ENCODE measurements at regions of chr10 and their contacts with region 1.

Region 1: GRCh38 chr10:74213571-74214162 is 62.6 kb downstream of the ADK start:
- DNase-seq: peak; percentile 70
- ATAC-seq: peak; percentile 62
- H3K4me3 ChIP-seq: no peak overlapping the region
- H3K4me3 Mint-ChIP-seq: no peak overlapping the region
- H3K27ac ChIP-seq: peak overlapping the region in 1 of 2 donors; percentile 69
- H3K27ac Mint-ChIP-seq: peak overlapping the region; percentile 39
- H3K4me1 ChIP-seq: peaks cover 6 to 10% of the 10 kb centered on the region in 2 donors
- H3K4me1 Mint-ChIP-seq: peaks cover 23% of the 10 kb centered on the region
- H3K27me3 ChIP-seq: no peaks in the 10 kb centered on the region
- H3K27me3 Mint-ChIP-seq: no peaks in the 10 kb centered on the region
- CTCF ChIP-seq: peak; percentile 68

Region 2: GRCh38 chr10:74120911-74121310 is 92.8 kb before region 1 on chr10:
- CTCF ChIA-PET with region 1: interaction called, 15 read pairs
- POLR2A ChIA-PET with region 1: no interaction called
- intact Hi-C with region 1: no loop called
- DNase-seq: no peak
- ATAC-seq: no peak
- H3K4me3 ChIP-seq: no peak overlapping the region
- H3K4me3 Mint-ChIP-seq: no peak overlapping the region
- H3K27ac ChIP-seq: no peak overlapping the region
- H3K27ac Mint-ChIP-seq: peak overlapping the region; percentile 16
- H3K4me1 ChIP-seq: no peaks in the 10 kb centered on the region
- H3K4me1 Mint-ChIP-seq: no peaks in the 10 kb centered on the region
- H3K27me3 ChIP-seq: no peaks in the 10 kb centered on the region
- H3K27me3 Mint-ChIP-seq: no peaks in the 10 kb centered on the region
- CTCF ChIP-seq: no peak

Region 3: DNA sequence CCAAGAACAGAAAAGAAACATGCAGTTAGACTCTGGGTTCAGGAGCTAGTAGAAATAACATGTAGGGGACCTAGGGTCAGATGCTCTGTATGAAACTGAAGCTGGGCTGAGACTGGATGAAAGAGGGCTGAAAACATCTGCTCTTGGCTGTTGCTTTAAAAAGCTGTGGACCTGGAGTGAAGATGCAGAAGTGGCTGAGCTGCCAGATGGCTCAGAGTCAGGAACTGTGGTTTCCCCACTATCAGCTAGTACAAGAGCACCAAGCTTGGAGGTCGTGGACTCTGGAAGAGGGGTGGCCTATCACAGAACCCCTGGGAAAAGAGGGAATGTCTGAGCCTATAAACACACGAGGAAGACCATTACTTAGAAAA is 56.8 kb before region 1 on chr10:
- CTCF ChIA-PET with region 1: interaction called, 16 read pairs
- POLR2A ChIA-PET with region 1: no interaction called
- intact Hi-C with region 1: no loop called
- DNase-seq: peak; percentile 29
- ATAC-seq: peak; percentile 54
- H3K4me3 ChIP-seq: no peak overlapping the region
- H3K4me3 Mint-ChIP-seq: peak overlapping the region; percentile 44
- H3K27ac ChIP-seq: peak overlapping the region in 1 of 2 donors; percentile 74
- H3K27ac Mint-ChIP-seq: peak overlapping the region; percentile 72
- H3K4me1 ChIP-seq: peaks cover 53 to 62% of the 10 kb centered on the region in 2 donors
- H3K4me1 Mint-ChIP-seq: peaks cover 77% of the 10 kb centered on the region
- H3K27me3 ChIP-seq: no peaks in the 10 kb centered on the region
- H3K27me3 Mint-ChIP-seq: no peaks in the 10 kb centered on the region
- CTCF ChIP-seq: no peak

Region 4: GRCh38 chr10:74189999-74190421 is 23.7 kb before region 1 on chr10:
- CTCF ChIA-PET with region 1: interaction called, 20 read pairs
- POLR2A ChIA-PET with region 1: no interaction called
- intact Hi-C with region 1: no loop called
- DNase-seq: peak; percentile 69
- ATAC-seq: peak; percentile 96
- H3K4me3 ChIP-seq: peak overlapping the region in 3 of 5 experiments; percentile 9 to 25 (median 15)
- H3K4me3 Mint-ChIP-seq: peak overlapping the region; percentile 77
- H3K27ac ChIP-seq: peak overlapping the region; percentile 68 to 80
- H3K27ac Mint-ChIP-seq: peak overlapping the region; percentile 95
- H3K4me1 ChIP-seq: peaks cover 30 to 57% of the 10 kb centered on the region in 2 donors
- H3K4me1 Mint-ChIP-seq: peaks cover 74% of the 10 kb centered on the region
- H3K27me3 ChIP-seq: no peaks in the 10 kb centered on the region
- H3K27me3 Mint-ChIP-seq: no peaks in the 10 kb centered on the region
- CTCF ChIP-seq: no peak

Region 5: DNA sequence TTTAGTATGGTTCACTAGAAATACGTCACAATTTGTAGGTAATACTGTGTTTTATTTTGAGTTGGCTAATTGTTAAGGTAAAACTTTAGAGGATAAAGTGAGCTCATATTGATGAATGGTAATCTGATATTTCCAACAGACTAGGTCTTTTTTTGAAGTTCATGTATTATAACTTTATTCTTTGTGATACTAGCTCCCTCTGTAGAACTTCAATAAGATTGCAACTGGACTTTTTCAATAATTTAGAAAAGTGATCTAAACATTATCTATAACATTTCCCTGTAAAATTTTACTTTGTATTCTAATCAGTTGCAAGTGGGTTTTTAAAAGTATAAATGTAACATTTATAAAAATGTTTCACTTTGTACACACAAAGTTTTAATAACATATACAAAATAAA is 20.9 kb after region 1 on chr10:
- CTCF ChIA-PET with region 1: interaction called, 13 read pairs
- POLR2A ChIA-PET with region 1: no interaction called
- intact Hi-C with region 1: no loop called
- DNase-seq: no peak
- ATAC-seq: no peak
- H3K4me3 ChIP-seq: no peak overlapping the region
- H3K4me3 Mint-ChIP-seq: no peak overlapping the region
- H3K27ac ChIP-seq: peak overlapping the region in 1 of 2 donors; percentile 12
- H3K27ac Mint-ChIP-seq: no peak overlapping the region
- H3K4me1 ChIP-seq: peaks cover 0 to 2% of the 10 kb centered on the region in 2 donors
- H3K4me1 Mint-ChIP-seq: peaks cover 18% of the 10 kb centered on the region
- H3K27me3 ChIP-seq: no peaks in the 10 kb centered on the region
- H3K27me3 Mint-ChIP-seq: no peaks in the 10 kb centered on the region
- CTCF ChIP-seq: peak; percentile 63

Region 6: DNA sequence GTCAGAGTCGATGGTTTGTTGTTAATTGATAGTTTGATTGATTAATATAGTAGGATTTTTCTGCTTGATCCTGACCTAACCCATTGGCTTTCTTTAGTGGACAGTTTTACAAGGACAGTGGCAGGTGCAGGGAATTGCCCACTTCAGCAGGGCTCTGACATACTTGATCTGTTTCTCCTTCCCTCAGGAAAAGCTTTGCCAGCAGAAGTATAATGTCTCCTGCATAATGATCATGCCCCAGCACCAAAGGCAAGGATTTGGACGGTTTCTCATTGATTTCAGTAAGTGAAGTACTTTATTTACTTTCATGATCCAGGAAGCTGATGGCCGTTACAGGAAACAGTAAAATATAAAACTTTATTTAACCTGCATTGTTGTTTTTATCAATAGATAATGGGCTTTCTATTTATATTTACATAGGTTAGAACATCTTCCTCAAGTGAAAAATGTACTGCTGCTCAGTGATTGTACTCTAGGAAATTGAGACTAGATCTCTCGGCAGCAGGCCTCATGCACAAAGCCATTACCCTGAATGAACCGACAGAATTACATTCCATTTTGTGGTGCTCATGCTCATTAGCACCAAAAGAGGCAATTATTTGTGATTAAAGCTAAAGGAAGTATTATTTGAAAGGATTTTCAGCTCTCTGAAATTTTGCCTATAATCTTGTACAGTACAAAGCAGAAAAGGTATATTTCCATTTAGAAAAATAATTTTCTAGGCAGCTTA is 775.3 kb after region 1 on chr10:
- CTCF ChIA-PET with region 1: no interaction called
- POLR2A ChIA-PET with region 1: no interaction called
- intact Hi-C with region 1: no loop called
- DNase-seq: no peak
- ATAC-seq: no peak
- H3K4me3 ChIP-seq: no peak overlapping the region
- H3K4me3 Mint-ChIP-seq: no peak overlapping the region
- H3K27ac ChIP-seq: no peak overlapping the region
- H3K27ac Mint-ChIP-seq: no peak overlapping the region
- H3K4me1 ChIP-seq: peaks cover 0 to 4% of the 10 kb centered on the region in 2 donors
- H3K4me1 Mint-ChIP-seq: peaks cover 3% of the 10 kb centered on the region
- H3K27me3 ChIP-seq: no peaks in the 10 kb centered on the region
- H3K27me3 Mint-ChIP-seq: no peaks in the 10 kb centered on the region
- CTCF ChIP-seq: no peak

Measured in B cell (primary cell).